ENCODE measurements at regions of chr17 and their contacts with region 1.

Region 1: DNA sequence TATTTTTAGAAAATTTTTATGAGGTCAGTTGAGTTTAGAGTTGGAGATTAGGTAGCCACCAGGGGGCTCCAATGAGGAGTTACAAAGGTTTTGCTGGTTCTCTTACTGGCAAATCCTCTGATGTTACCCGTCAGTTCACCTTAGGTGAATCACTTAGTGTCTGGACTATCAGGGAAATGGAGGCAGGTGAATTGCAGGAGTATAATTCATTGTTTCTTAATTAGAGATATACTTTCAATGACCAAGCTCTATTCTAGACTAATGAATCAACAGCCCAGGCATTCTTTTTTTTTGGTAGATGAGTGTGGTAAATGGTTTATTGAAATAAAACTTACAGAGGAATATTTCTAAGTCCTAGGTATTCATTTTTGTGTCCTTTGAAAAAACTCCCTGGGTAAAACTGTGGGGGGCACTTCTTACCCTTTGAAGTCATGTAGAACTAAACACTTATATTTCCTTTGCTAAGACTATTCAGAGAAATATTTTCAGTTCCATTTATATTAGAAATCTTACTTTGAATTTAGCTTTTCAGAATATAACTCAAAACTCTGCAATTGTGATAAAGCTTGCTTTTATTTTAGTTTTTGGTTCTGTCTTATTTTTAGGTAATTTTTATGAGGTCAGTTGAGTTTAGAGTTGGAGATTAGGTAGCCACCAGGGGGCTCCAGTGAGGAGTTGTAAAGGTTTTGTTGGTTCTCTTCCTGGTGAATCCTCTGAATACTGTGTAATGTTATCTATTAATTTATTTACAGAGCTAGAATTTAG is 17.7 kb downstream of the PSMD11 start:
- DNase-seq: peak; percentile 75
- H3K4me3 Mint-ChIP-seq: no peak overlapping the region
- H3K27ac Mint-ChIP-seq: no peak overlapping the region
- H3K4me1 Mint-ChIP-seq: peaks cover 17% of the 10 kb centered on the region
- H3K27me3 Mint-ChIP-seq: no peaks in the 10 kb centered on the region
- CTCF ChIP-seq: peak; percentile 66

Region 2: GRCh38 chr17:32444308-32445073 is 17.5 kb before region 1 on chr17 and contains the start of gene PSMD11:
- CTCF ChIA-PET with region 1: interaction called, 22 read pairs
- intact Hi-C with region 1: no loop called
- DNase-seq: peak; percentile 99
- H3K4me3 Mint-ChIP-seq: peak within 1 kb of the TSS; percentile 89
- H3K27ac Mint-ChIP-seq: peak within 1 kb of the TSS; percentile 48
- H3K4me1 Mint-ChIP-seq: peaks cover 20% of the 10 kb centered on the region
- H3K27me3 Mint-ChIP-seq: no peaks in the 10 kb centered on the region
- CTCF ChIP-seq: peak; percentile 96
- total RNA-seq, gene PSMD11: 152 and 167 TPM in 2 replicates

Region 3: DNA sequence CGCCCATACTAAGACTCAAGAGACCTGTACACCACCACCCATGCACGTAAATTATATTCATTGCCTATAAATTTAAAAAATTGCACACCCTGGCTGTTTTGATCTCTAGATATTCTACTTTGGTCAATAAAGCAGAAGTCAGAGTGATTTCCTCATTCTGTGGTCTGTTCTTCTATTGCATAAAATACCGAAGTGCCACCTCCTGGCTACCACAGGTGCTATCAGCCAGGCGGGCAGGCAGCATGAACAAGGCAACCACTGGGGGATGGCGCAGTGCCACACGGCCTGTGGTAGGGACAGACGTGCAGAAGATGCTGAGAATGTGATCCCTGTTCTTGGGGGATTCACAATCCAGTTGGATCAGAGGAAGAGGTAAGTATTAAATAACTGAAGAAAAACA is 147.1 kb after region 1 on chr17:
- CTCF ChIA-PET with region 1: no interaction called
- intact Hi-C with region 1: loop called (anchors 2 kb)
- DNase-seq: peak; percentile 78
- H3K4me3 Mint-ChIP-seq: no peak overlapping the region
- H3K27ac Mint-ChIP-seq: no peak overlapping the region
- H3K4me1 Mint-ChIP-seq: peaks cover 8% of the 10 kb centered on the region
- H3K27me3 Mint-ChIP-seq: no peaks in the 10 kb centered on the region
- CTCF ChIP-seq: peak; percentile 52

Measured in Calu3 (cell line).